Activated CD8-positive, alpha-beta T cell treated with anti-CD3 and anti-CD28 coated beads for 36 hours (primary cell): ENCODE measurements at regions of chr10 and their contacts with region 1.

Region 1: GRCh38 chr10:114470956-114471905 is 66.9 kb upstream of the AFAP1L2 start:
- DNase-seq: peak; percentile 72
- ATAC-seq: peak; percentile 89
- H3K4me3 Mint-ChIP-seq: no peak overlapping the region
- H3K27ac Mint-ChIP-seq: peak overlapping the region; percentile 65
- H3K4me1 Mint-ChIP-seq: peaks cover 23% of the 10 kb centered on the region
- H3K27me3 Mint-ChIP-seq: no peaks in the 10 kb centered on the region
- CTCF ChIP-seq: peak; percentile 97

Region 2: DNA sequence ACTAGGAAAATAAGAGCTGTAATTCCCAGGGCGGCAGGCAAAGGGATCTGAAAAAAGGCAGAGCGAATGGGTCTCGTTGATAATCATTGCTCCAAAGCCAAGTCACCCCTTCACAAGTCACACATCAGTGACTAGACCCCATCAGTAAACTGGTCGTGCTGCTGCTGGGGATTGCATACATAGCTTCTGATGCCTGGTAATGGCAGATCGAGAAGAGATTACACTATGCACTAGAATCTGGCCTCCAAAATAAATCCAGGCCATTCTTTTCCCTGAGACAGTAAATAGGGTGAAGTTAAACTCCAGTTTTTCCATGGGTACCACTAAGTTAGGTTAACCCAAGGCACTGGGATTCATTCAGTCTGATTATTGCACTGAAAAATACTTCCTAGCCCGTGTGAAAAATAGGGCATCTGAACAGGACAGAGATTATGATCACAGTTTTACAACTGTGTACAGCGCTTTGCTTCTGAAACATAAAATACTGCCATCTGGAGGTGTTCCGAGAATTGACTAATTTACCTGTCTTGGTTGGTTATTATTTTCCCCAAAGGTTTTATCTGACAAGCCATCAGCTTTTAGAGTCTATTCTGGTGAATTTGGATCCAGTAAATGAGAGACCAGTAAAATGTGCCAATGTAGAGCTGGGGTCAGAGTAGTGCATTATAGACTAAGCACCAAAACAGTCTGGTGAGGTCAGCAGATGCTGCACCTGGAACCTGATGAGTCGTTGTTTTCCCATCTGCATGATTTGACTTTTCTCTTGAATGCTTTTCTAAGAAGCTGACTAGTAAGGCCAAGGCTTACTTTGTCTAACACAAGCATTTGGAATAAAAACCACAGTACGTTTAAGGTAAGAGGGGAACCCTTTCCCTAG is 15.9 kb after region 1 on chr10:
- CTCF ChIA-PET with region 1: interaction called, 51 read pairs
- POLR2A ChIA-PET with region 1: interaction called, 4 read pairs
- intact Hi-C with region 1: no loop called
- DNase-seq: peak; percentile 50
- ATAC-seq: peak; percentile 72
- H3K4me3 Mint-ChIP-seq: no peak overlapping the region
- H3K27ac Mint-ChIP-seq: peak overlapping the region; percentile 76
- H3K4me1 Mint-ChIP-seq: peaks cover 56% of the 10 kb centered on the region
- H3K27me3 Mint-ChIP-seq: no peaks in the 10 kb centered on the region
- CTCF ChIP-seq: peak; percentile 42

Region 3: GRCh38 chr10:114526504-114527238 is 55.4 kb after region 1 on chr10:
- CTCF ChIA-PET with region 1: interaction called, 55 read pairs
- POLR2A ChIA-PET with region 1: interaction called, 6 read pairs
- intact Hi-C with region 1: no loop called
- DNase-seq: peak; percentile 97
- ATAC-seq: peak; percentile 91
- H3K4me3 Mint-ChIP-seq: peak overlapping the region; percentile 87
- H3K27ac Mint-ChIP-seq: peak overlapping the region; percentile 93
- H3K4me1 Mint-ChIP-seq: peaks cover 51% of the 10 kb centered on the region
- H3K27me3 Mint-ChIP-seq: no peaks in the 10 kb centered on the region
- CTCF ChIP-seq: no peak

Region 4: GRCh38 chr10:114550756-114551635 is 79.8 kb after region 1 on chr10:
- CTCF ChIA-PET with region 1: interaction called, 133 read pairs
- POLR2A ChIA-PET with region 1: no interaction called
- intact Hi-C with region 1: loop called (anchors 2 kb)
- DNase-seq: no peak
- ATAC-seq: no peak
- H3K4me3 Mint-ChIP-seq: no peak overlapping the region
- H3K27ac Mint-ChIP-seq: no peak overlapping the region
- H3K4me1 Mint-ChIP-seq: peaks cover 18% of the 10 kb centered on the region
- H3K27me3 Mint-ChIP-seq: no peaks in the 10 kb centered on the region
- CTCF ChIP-seq: peak; percentile 78

Region 5: GRCh38 chr10:114779803-114780609 is 308.8 kb after region 1 on chr10:
- CTCF ChIA-PET with region 1: no interaction called
- POLR2A ChIA-PET with region 1: no interaction called
- intact Hi-C with region 1: loop called (anchors 10 kb)
- DNase-seq: no peak
- ATAC-seq: no peak
- H3K4me3 Mint-ChIP-seq: no peak overlapping the region
- H3K27ac Mint-ChIP-seq: peak overlapping the region; percentile 12
- H3K4me1 Mint-ChIP-seq: peaks cover 5% of the 10 kb centered on the region
- H3K27me3 Mint-ChIP-seq: peaks cover 2% of the 10 kb centered on the region
- CTCF ChIP-seq: no peak